ENCODE measurements at regions of chr14 and their contacts with region 1.

Region 1: GRCh38 chr14:22852940-22853767 is 16.8 kb downstream of the MMP14 start:
- DNase-seq: peak; percentile 79 to 99 (median 92)
- ATAC-seq: peak; percentile 74 to 90 (median 86)
- H3K4me3 ChIP-seq: peak overlapping the region in 3 of 4 donors; percentile 9 to 50 (median 37)
- H3K27ac ChIP-seq: peak overlapping the region; percentile 53 to 85 (median 69)
- H3K4me1 ChIP-seq: peaks cover 12 to 14% (median 14%) of the 10 kb centered on the region in 3 donors
- H3K27me3 ChIP-seq: no peaks in the 10 kb centered on the region
- CTCF ChIP-seq: peak; percentile 90 to 96 (median 91)

Region 2: DNA sequence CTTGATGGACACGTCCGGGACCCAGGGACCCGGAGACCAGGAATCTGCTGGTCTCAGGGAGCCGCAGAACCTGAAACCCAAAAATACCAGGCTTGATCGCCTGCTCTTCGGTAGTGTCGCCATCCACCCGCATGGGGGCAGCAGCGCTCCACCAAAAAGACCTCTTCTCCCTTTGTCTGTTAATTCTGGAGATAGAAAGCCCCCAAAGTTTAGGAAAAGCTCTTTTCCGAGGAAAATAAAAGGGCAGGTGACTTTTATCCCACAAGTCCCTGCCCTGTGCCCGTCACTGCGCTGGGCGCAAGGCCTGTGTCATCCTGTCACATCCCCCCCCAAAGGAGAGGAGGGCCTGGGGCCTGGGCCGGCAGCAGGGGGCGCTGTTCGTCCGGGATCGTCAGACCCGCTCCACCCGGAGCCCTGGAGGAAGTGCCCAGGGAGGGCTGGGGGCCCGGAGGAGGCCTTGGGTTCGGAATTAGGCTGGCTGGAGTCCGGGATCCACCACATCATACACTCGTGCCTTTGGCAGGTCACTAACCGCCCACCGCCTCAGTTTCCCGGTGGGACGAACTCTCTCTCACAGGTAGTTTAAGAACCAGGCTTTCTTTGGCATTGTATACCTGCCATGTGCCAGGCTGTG is 296.0 kb before region 1 on chr14:
- intact Hi-C with region 1: loop called in 2 of 3 experiments (anchors 10 kb)
- DNase-seq: peak; percentile 74 to 99 (median 89)
- ATAC-seq: peak; percentile 80 to 89 (median 86)
- H3K4me3 ChIP-seq: peak overlapping the region in 2 of 4 donors; percentile 10 to 30
- H3K27ac ChIP-seq: peak overlapping the region in 2 of 4 donors; percentile 87 to 90
- H3K4me1 ChIP-seq: peaks cover 19 to 48% (median 41%) of the 10 kb centered on the region in 3 donors
- H3K27me3 ChIP-seq: no peaks in the 10 kb centered on the region
- CTCF ChIP-seq: peak; percentile 94 to 99 (median 96)

Region 3: GRCh38 chr14:22822571-22823098 is 30.5 kb before region 1 on chr14:
- intact Hi-C with region 1: loop called in 1 of 3 experiments (anchors 5 kb)
- DNase-seq: peak; percentile 63 to 83 (median 74)
- ATAC-seq: peak; percentile 44 to 73 (median 67)
- H3K4me3 ChIP-seq: peak overlapping the region in 2 of 4 donors; percentile 4 to 41
- H3K27ac ChIP-seq: peak overlapping the region; percentile 52 to 88 (median 68)
- H3K4me1 ChIP-seq: peaks cover 22 to 39% (median 39%) of the 10 kb centered on the region in 3 donors
- H3K27me3 ChIP-seq: no peaks in the 10 kb centered on the region
- CTCF ChIP-seq: peak; percentile 48 to 71 (median 62)

Region 4: DNA sequence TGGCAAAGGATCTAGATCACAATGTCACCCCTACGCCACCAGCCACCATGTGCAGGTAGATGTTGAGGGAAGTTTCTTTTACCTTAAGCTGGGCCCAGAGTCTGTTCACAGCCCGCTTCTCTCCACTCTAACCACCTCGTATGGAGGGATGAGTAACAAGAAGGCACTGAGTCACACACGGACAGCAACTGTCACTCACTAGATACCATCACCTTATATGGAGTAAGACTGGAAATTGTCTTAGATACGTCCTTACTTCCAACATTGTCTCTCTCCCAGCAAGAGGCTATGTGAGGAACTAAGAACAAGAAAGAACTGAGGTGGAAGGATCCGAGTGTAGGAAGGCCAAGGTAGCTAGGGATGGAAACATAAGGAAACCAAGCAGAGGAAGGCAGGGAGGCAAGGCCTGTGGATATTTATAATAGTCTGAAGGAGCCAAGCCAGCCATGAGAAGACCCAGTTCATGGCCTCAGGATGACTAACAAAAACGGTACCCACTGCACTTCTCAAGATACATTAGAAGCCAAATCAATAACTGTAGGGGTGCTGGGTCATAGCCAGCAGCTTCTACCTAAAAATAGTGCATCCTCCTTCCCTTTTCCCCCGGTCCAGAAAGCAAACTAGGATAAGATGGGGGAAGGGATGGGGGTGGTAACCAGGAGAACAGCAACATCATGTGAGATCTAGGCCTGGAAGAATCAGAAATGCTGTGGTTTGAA is 45.4 kb after region 1 on chr14:
- intact Hi-C with region 1: no loop called
- DNase-seq: no peak
- ATAC-seq: no peak
- H3K4me3 ChIP-seq: no peak overlapping the region
- H3K27ac ChIP-seq: no peak overlapping the region
- H3K4me1 ChIP-seq: peaks cover 0 to 7% (median 2%) of the 10 kb centered on the region in 3 donors
- H3K27me3 ChIP-seq: no peaks in the 10 kb centered on the region
- CTCF ChIP-seq: no peak

Region 5: DNA sequence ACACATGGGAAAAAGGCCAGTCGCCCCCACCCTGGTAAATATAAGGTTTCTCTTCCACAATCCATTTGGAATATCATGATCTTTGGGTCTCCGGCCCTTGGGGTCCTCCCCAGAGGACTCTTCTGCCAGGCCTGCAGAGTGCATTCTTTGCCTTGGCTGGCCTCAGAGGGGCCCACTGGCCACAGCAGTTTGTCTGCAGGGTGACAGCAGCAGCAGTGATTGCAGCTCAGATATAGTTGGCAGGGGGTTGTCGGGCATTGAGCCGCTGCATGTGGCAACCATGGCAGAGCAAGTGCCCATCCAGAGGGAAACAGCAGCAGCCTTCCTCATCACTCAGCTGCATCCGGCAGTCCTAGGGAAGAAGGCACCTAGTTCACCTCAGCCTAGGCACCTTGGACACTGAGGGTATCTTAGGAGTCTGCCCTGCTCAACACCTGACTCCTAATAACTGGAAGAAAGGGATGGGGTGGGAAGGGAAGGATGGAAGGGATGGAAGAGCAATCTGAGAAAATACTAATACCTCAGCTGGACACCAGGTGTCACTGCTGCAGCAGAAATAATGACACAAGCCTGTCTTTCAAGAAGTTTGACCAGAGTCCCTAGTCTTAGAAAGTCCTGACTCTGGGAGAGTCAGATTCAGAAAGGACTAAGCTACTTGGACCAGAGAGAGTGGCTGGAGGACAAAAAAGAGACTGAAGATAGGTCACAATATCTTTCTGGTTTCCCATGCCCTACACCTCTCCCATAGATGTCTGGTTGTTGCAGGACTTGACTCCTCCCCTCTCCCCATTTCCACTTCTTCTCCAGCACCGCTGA is 120.3 kb after region 1 on chr14:
- intact Hi-C with region 1: no loop called
- DNase-seq: peak in 1 of 6 donors; percentile 61
- ATAC-seq: peak; percentile 22 to 66 (median 58)
- H3K4me3 ChIP-seq: no peak overlapping the region
- H3K27ac ChIP-seq: no peak overlapping the region
- H3K4me1 ChIP-seq: peaks cover 18 to 23% (median 22%) of the 10 kb centered on the region in 3 donors
- H3K27me3 ChIP-seq: no peaks in the 10 kb centered on the region
- CTCF ChIP-seq: peak; percentile 34 to 55 (median 46)

Measured in pancreas (tissue), 10 donors.